Colonic mucosa (tissue), 4 donors: ENCODE measurements at regions of chr2 and their contacts with region 1.

Region 1: DNA sequence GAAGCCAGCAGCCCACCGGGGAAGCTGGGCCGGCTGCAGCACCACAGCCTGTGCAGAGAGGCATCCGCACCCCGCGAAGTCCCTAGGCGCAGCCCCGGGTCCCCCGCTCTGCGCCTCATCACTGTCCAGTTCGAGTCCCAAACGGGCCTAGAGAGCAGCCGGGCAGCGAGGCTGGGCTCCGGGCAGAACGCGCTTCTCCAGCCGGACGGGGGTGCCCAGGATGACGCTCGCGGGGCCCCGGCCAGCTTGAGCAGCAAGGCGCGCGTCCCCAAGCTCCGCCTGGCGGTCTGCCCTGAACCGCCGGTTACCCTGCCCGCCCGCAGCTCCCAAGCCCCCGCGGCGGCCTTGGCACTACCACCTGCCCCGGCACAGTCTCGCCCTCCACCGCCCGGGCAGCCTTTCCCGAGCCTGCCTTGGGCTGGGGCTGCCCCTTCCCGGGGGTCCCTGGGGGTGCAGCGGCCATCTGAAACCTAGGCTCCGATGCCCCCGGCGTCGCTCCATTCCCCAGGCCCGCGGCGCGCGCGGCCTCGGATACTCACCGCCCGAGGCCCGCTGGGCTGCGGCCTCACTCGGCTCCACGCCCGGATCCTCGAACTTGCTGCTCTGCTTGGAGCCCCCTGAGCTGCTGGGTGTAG is 591 bp downstream of the SLC16A14 start:
- DNase-seq: peak; percentile 56
- H3K4me3 ChIP-seq: peak overlapping the region; percentile 65
- H3K27ac ChIP-seq: no peak overlapping the region
- H3K4me1 ChIP-seq: no peaks in the 10 kb centered on the region
- H3K27me3 ChIP-seq: no peaks in the 10 kb centered on the region
- CTCF ChIP-seq: no peak

Region 2: GRCh38 chr2:229475778-229476177 is 592.4 kb before region 1 on chr2:
- intact Hi-C with region 1: no loop called
- DNase-seq: no peak
- H3K4me3 ChIP-seq: no peak overlapping the region
- H3K27ac ChIP-seq: no peak overlapping the region
- H3K4me1 ChIP-seq: no peaks in the 10 kb centered on the region
- H3K27me3 ChIP-seq: no peaks in the 10 kb centered on the region
- CTCF ChIP-seq: no peak

Region 3: DNA sequence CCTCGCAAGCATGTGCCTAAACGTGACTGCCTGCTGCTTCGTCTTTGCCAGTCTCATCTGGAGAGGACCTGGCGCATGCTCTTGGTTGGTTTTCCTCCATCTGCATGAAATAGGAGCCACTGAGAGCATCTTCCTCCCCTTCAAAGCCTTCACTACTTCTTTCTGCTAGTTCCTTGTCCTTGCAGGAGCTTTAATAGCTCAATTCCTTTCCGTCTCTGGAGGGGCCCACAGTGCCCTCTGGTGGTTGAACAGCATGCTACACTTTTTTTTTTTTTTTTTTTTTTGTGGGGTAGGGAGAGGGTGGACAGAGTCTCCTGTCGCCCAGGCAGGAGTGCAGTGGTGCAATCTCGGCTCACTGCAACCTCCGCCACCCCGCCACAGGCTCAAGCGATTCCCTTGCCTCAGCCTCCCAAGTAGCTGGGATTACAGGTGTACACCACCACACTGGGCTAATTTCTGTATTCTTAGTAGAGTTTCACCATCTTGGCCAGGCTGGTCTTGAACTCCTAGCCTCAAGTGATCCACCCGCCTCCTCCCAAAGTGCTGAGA is 92.1 kb after region 1 on chr2:
- intact Hi-C with region 1: loop called (anchors 2 kb)
- DNase-seq: peak; percentile 53
- H3K4me3 ChIP-seq: no peak overlapping the region
- H3K27ac ChIP-seq: no peak overlapping the region
- H3K4me1 ChIP-seq: no peaks in the 10 kb centered on the region
- H3K27me3 ChIP-seq: no peaks in the 10 kb centered on the region
- CTCF ChIP-seq: peak; percentile 85